IMR-90 (cell line): ENCODE measurements at regions of chr12 and their contacts with region 1.

Region 1: DNA sequence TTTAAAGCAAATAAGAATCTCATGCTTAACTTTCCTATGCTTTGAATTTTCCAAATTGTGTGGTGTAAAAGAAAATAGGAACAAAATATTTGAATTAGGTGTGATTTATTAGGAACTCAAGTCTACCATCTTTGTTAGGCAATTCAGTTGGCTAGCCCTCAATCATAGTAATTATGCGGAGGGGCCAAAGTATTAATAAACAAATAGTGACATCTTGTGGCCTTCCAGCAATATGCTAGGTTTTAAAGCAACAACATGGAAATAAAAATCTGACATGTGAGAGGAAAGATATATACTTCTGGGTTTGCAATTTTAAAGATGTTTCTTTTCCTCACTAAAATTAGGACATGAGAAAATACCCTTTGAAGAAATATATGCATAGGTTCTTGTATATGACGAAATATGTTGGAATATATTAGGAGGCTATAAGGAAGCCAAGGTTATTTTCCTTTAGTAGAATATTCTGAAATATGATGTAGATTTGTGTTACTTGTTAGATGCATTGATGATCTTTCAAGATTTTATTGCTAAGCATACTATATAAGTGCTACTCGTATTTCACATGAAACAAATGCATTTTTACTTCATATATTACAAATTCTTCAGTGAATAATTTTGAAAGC is 200.4 kb downstream of the PTPRO start:
- DNase-seq: peak; percentile 34
- ATAC-seq: no peak
- H3K4me3 ChIP-seq: no peak overlapping the region
- H3K27ac ChIP-seq: no peak overlapping the region
- H3K4me1 ChIP-seq: no peaks in the 10 kb centered on the region
- H3K27me3 ChIP-seq: peaks cover 15% of the 10 kb centered on the region
- CTCF ChIP-seq: peak; percentile 61
- POLR2A ChIP-seq: no peak
- RAD21 ChIP-seq: peak; percentile 64

Region 2: DNA sequence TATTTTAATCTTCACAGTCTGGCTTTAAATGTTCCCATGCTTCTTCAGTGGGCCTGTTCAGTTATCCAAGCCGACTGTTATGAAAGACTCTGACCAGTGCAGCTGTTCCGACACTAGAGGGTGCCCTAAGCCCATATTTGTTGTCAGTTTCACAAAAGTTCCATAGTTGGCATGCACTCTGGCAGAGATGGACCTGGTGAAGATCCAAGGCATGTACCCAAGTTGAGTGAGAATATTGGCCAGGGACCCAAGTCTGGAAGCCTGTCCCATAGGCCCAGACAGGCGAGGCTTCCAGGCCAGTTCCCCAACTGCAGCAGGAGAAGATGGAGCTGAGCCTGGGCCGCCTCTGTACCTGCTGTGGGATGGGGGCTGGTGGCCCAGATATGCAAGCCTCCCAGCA is 798.9 kb before region 1 on chr12:
- CTCF ChIA-PET with region 1: no interaction called
- POLR2A ChIA-PET with region 1: no interaction called
- dilution Hi-C with region 1: no loop called
- in situ Hi-C with region 1: no loop called
- intact Hi-C with region 1: loop called (anchors 5 kb)
- DNase-seq: peak; percentile 58
- ATAC-seq: peak; percentile 80
- H3K4me3 ChIP-seq: no peak overlapping the region
- H3K27ac ChIP-seq: no peak overlapping the region
- H3K4me1 ChIP-seq: no peaks in the 10 kb centered on the region
- H3K27me3 ChIP-seq: no peaks in the 10 kb centered on the region
- CTCF ChIP-seq: peak; percentile 74
- POLR2A ChIP-seq: no peak
- RAD21 ChIP-seq: peak; percentile 78

Region 3: GRCh38 chr12:14913381-14913781 is 609.3 kb before region 1 on chr12:
- CTCF ChIA-PET with region 1: no interaction called
- POLR2A ChIA-PET with region 1: no interaction called
- dilution Hi-C with region 1: no loop called
- in situ Hi-C with region 1: no loop called
- intact Hi-C with region 1: no loop called
- DNase-seq: no peak
- ATAC-seq: no peak
- H3K4me3 ChIP-seq: no peak overlapping the region
- H3K27ac ChIP-seq: no peak overlapping the region
- H3K4me1 ChIP-seq: peaks cover 1% of the 10 kb centered on the region; the same call in 1 of the 2 replicates
- H3K27me3 ChIP-seq: no peaks in the 10 kb centered on the region; the same call in 1 of the 2 replicates
- CTCF ChIP-seq: no peak
- POLR2A ChIP-seq: no peak
- RAD21 ChIP-seq: no peak

Region 4: DNA sequence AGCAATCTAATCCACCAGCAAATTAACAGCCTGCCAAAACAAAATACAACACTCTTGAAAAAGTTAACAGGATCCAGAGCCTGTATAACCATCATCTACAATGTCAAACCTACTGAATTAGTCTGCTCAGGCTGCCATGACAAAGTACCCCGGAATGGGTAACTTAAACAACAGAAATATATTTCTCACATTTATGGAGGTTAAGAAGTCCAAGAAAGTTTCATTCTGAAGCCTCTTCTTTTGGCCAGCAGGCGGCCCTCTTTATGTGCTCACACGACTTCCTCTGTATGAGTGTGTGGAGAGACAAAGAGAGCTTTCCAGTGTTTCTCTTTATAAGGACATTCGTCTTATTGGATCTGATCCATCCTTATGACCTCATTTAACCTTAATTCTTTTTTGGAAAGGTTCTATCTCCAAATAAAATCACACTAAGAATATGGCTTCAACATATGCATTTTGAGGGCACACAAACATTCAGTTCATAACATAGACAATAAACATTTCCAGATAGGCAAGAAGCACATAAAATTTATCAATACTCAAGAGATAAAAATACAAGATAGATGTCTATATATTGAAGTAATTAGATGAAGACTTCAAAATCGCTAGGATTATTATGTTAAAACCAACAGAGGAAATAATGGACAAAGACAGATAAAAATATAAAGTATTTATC is 295.5 kb before region 1 on chr12:
- CTCF ChIA-PET with region 1: no interaction called
- POLR2A ChIA-PET with region 1: no interaction called
- dilution Hi-C with region 1: no loop called
- in situ Hi-C with region 1: no loop called
- intact Hi-C with region 1: loop called (anchors 2 kb)
- DNase-seq: peak; percentile 33
- ATAC-seq: peak; percentile 81
- H3K4me3 ChIP-seq: no peak overlapping the region
- H3K27ac ChIP-seq: no peak overlapping the region
- H3K4me1 ChIP-seq: no peaks in the 10 kb centered on the region
- H3K27me3 ChIP-seq: peaks cover 2% of the 10 kb centered on the region; the same call in 1 of the 2 replicates
- CTCF ChIP-seq: peak; percentile 49
- POLR2A ChIP-seq: no peak
- RAD21 ChIP-seq: peak; percentile 33

Region 5: DNA sequence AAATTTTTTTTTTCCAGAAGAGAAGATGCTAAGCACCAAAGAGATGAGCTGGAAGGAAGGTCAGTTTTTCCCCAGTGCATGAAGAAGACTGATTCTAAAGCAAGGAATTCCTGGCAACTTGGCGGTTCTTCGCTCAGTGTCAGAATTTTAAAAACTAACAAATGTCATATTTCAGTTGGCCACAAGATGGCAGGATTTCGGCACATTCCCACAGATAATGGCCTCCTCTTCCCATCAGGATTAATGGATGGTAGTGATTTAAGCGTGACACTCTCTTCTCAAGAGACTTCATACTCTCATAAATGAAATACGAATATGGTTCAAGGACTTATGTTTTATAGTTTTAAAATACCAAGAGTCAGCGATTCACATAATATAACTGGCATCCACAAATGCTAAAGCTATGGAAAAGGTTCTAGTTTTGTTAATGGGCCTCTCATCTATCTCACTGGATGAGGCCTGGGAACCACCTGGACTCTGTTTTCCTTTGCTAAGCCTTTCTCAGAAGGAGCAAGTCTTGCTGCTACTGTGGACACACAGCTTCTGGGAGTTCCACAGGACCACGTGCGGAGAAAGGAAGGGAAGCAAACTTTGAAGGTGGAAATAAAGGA is 246.5 kb before region 1 on chr12:
- CTCF ChIA-PET with region 1: interaction called, 3 read pairs
- POLR2A ChIA-PET with region 1: no interaction called
- dilution Hi-C with region 1: no loop called
- in situ Hi-C with region 1: loop called (anchors 5 kb)
- intact Hi-C with region 1: loop called (anchors 1 kb)
- DNase-seq: peak; percentile 29
- ATAC-seq: peak; percentile 76
- H3K4me3 ChIP-seq: no peak overlapping the region
- H3K27ac ChIP-seq: no peak overlapping the region
- H3K4me1 ChIP-seq: no peaks in the 10 kb centered on the region
- H3K27me3 ChIP-seq: no peaks in the 10 kb centered on the region
- CTCF ChIP-seq: peak; percentile 79
- POLR2A ChIP-seq: no peak
- RAD21 ChIP-seq: peak; percentile 68

Region 6: DNA sequence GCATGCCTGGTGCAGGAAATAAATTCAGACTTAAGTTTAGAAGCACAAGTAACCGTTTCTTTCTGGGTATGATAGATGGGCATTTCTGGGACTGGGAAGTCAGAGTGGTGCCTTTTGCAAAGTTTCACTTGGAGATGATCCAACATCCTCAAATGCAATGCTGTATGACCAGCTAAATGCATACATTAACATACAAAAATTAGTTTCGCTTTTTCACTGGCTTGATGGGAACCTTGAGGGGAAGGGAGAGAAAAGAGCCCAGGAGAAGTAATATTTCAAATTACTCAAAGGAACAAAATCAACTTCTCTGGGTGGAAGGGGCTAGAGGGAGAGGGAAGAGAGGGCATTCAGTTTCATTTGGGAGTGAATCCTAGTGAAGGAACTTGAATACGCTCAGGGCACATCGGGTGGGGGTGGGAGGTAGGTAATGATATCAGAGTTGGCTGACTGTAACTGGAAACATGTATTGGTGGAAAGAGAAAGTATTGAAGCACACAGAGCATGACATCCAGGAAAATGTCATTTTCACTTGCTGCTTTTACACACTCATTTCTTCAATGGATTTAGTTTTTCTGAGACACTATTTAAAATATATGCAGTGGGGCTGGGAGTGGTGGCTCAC is 24.9 kb before region 1 on chr12:
- CTCF ChIA-PET with region 1: no interaction called
- POLR2A ChIA-PET with region 1: interaction called, 12 read pairs
- dilution Hi-C with region 1: no loop called
- in situ Hi-C with region 1: no loop called
- intact Hi-C with region 1: no loop called
- DNase-seq: no peak
- ATAC-seq: no peak
- H3K4me3 ChIP-seq: no peak overlapping the region
- H3K27ac ChIP-seq: no peak overlapping the region
- H3K4me1 ChIP-seq: no peaks in the 10 kb centered on the region
- H3K27me3 ChIP-seq: peaks cover 2% of the 10 kb centered on the region; the same call in 1 of the 2 replicates
- CTCF ChIP-seq: no peak
- POLR2A ChIP-seq: no peak
- RAD21 ChIP-seq: no peak

Region 7: DNA sequence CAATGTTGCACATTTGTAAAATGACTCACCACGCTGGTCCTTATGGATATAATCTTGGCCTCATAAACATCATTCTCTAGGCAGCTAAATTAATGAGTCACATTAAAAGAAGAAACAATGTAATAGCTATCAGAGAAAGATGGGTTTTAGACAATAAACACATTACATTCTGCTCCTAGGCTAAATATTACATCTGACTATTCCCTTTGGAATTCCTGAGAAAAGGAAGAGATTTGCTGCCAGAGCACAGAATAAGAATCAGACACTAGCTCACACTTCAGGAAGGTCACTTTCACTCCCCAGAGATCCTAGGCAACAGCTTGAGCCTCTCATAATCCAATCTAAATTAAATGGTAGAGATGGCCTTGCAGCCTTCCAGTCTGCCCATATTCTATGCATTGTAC is 17.8 kb after region 1 on chr12:
- CTCF ChIA-PET with region 1: no interaction called
- POLR2A ChIA-PET with region 1: no interaction called
- dilution Hi-C with region 1: no loop called
- in situ Hi-C with region 1: no loop called
- intact Hi-C with region 1: no loop called
- DNase-seq: peak; percentile 78
- ATAC-seq: peak; percentile 84
- H3K4me3 ChIP-seq: no peak overlapping the region
- H3K27ac ChIP-seq: no peak overlapping the region
- H3K4me1 ChIP-seq: peaks cover 7% of the 10 kb centered on the region
- H3K27me3 ChIP-seq: no peaks in the 10 kb centered on the region
- CTCF ChIP-seq: no peak
- POLR2A ChIP-seq: no peak
- RAD21 ChIP-seq: no peak